ENCODE measurements at regions of chr14 and their contacts with region 1.

Region 1: GRCh38 chr14:74860906-74861733 is 14.8 kb downstream of the PROX2 start:
- DNase-seq: no peak
- H3K4me3 ChIP-seq: no peak overlapping the region
- H3K27ac ChIP-seq: no peak overlapping the region
- H3K4me1 ChIP-seq: no peaks in the 10 kb centered on the region
- H3K27me3 ChIP-seq: no peaks in the 10 kb centered on the region
- CTCF ChIP-seq: peak; percentile 75 to 85 (median 83)
- POLR2A ChIP-seq: no peak

Region 2: GRCh38 chr14:74905375-74906142 is 44.4 kb after region 1 on chr14:
- intact Hi-C with region 1: loop called (anchors 5 kb)
- DNase-seq: no peak
- H3K4me3 ChIP-seq: no peak overlapping the region
- H3K27ac ChIP-seq: peak overlapping the region; percentile 4
- H3K4me1 ChIP-seq: peaks cover 29% of the 10 kb centered on the region
- H3K27me3 ChIP-seq: no peaks in the 10 kb centered on the region
- CTCF ChIP-seq: peak; percentile 78 to 92 (median 92)
- POLR2A ChIP-seq: no peak

Region 3: GRCh38 chr14:74922739-74923401 is 61.8 kb after region 1 on chr14 and contains the start of gene RPS6KL1:
- intact Hi-C with region 1: no loop called
- DNase-seq: no peak
- H3K4me3 ChIP-seq: peak within 1 kb of the TSS; percentile 50 to 57
- H3K27ac ChIP-seq: no peak within 1 kb of the TSS
- H3K4me1 ChIP-seq: peaks cover 18% of the 10 kb centered on the region
- H3K27me3 ChIP-seq: no peaks in the 10 kb centered on the region
- CTCF ChIP-seq: no peak
- POLR2A ChIP-seq: no peak
- total RNA-seq, gene RPS6KL1: 2.0 TPM

Region 4: DNA sequence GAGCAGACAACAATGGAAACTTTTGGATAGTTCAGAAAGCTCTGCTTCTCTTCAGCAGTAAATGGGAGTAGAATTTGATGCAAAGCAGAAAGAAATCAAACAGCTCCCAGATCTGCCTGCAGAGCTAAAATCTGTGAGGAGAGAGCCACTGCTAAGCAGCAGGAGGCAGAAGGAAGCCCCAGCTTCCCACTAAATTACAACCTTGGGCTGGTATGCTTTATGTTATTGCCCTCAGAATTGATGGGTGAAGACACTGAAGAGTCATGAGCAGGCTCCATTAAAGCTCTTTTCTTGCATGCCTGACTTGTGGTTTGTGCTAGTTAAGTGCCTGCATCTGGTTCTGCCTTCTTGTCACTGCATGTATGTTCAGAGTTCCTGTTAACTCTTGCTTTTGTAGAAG is 216.7 kb after region 1 on chr14:
- intact Hi-C with region 1: loop called (anchors 2 kb)
- DNase-seq: no peak
- H3K4me3 ChIP-seq: no peak overlapping the region
- H3K27ac ChIP-seq: no peak overlapping the region
- H3K4me1 ChIP-seq: no peaks in the 10 kb centered on the region
- H3K27me3 ChIP-seq: no peaks in the 10 kb centered on the region
- CTCF ChIP-seq: no peak
- POLR2A ChIP-seq: no peak

Measured in vagina (tissue), 2 donors.